MCF 10A (cell line): ENCODE measurements at regions of chr11 and their contacts with region 1.

Region 1: GRCh38 chr11:62665075-62665598 is at the starts of genes C11orf98 and CSKMT:
- DNase-seq: peak; percentile 92
- H3K4me3 Mint-ChIP-seq: peak within 1 kb of the TSS; percentile 98
- H3K27ac Mint-ChIP-seq: peak within 1 kb of the TSS; percentile 91
- H3K4me1 Mint-ChIP-seq: peaks cover 5% of the 10 kb centered on the region
- H3K27me3 Mint-ChIP-seq: no peaks in the 10 kb centered on the region
- CTCF ChIP-seq: no peak
- total RNA-seq, gene C11orf98: 81.2 and 91.6 TPM in 2 replicates
- total RNA-seq, gene CSKMT: 15.4 and 31.2 TPM in 2 replicates

Region 2: GRCh38 chr11:62573592-62574362 is 91.4 kb before region 1 on chr11 and contains the start of gene EEF1G:
- CTCF ChIA-PET with region 1: interaction called, 3 read pairs
- POLR2A ChIA-PET with region 1: interaction called, 39 read pairs
- intact Hi-C with region 1: no loop called
- DNase-seq: peak; percentile 100
- H3K4me3 Mint-ChIP-seq: peak within 1 kb of the TSS; percentile 100
- H3K27ac Mint-ChIP-seq: peak within 1 kb of the TSS; percentile 100
- H3K4me1 Mint-ChIP-seq: peaks cover 30% of the 10 kb centered on the region
- H3K27me3 Mint-ChIP-seq: no peaks in the 10 kb centered on the region
- CTCF ChIP-seq: no peak
- total RNA-seq, gene EEF1G: 1,510 and 1,855 TPM in 2 replicates

Region 3: GRCh38 chr11:62621567-62622470 is 43.3 kb before region 1 on chr11 and contains the start of gene B3GAT3:
- CTCF ChIA-PET with region 1: no interaction called
- POLR2A ChIA-PET with region 1: interaction called, 86 read pairs
- intact Hi-C with region 1: no loop called
- DNase-seq: peak; percentile 98
- H3K4me3 Mint-ChIP-seq: peak within 1 kb of the TSS; percentile 97
- H3K27ac Mint-ChIP-seq: peak within 1 kb of the TSS; percentile 92
- H3K4me1 Mint-ChIP-seq: peaks cover 12% of the 10 kb centered on the region
- H3K27me3 Mint-ChIP-seq: no peaks in the 10 kb centered on the region
- CTCF ChIP-seq: no peak
- total RNA-seq, gene B3GAT3: 40.1 and 42.4 TPM in 2 replicates

Region 4: GRCh38 chr11:62689421-62690183 is 24.5 kb after region 1 on chr11 and contains the start of gene LRRN4CL:
- CTCF ChIA-PET with region 1: interaction called, 13 read pairs
- POLR2A ChIA-PET with region 1: interaction called, 12 read pairs
- intact Hi-C with region 1: no loop called
- DNase-seq: peak; percentile 83
- H3K4me3 Mint-ChIP-seq: no peak within 1 kb of the TSS
- H3K27ac Mint-ChIP-seq: peak within 1 kb of the TSS; percentile 86
- H3K4me1 Mint-ChIP-seq: peaks cover 19% of the 10 kb centered on the region
- H3K27me3 Mint-ChIP-seq: no peaks in the 10 kb centered on the region
- CTCF ChIP-seq: no peak
- total RNA-seq, gene LRRN4CL: 0.42 and 0.81 TPM in 2 replicates

Region 5: GRCh38 chr11:62737196-62737595 is 72.1 kb after region 1 on chr11:
- CTCF ChIA-PET with region 1: no interaction called
- POLR2A ChIA-PET with region 1: no interaction called
- intact Hi-C with region 1: no loop called
- DNase-seq: no peak
- H3K4me3 Mint-ChIP-seq: no peak overlapping the region
- H3K27ac Mint-ChIP-seq: no peak overlapping the region
- H3K4me1 Mint-ChIP-seq: no peaks in the 10 kb centered on the region
- H3K27me3 Mint-ChIP-seq: no peaks in the 10 kb centered on the region
- CTCF ChIP-seq: no peak

Region 6: DNA sequence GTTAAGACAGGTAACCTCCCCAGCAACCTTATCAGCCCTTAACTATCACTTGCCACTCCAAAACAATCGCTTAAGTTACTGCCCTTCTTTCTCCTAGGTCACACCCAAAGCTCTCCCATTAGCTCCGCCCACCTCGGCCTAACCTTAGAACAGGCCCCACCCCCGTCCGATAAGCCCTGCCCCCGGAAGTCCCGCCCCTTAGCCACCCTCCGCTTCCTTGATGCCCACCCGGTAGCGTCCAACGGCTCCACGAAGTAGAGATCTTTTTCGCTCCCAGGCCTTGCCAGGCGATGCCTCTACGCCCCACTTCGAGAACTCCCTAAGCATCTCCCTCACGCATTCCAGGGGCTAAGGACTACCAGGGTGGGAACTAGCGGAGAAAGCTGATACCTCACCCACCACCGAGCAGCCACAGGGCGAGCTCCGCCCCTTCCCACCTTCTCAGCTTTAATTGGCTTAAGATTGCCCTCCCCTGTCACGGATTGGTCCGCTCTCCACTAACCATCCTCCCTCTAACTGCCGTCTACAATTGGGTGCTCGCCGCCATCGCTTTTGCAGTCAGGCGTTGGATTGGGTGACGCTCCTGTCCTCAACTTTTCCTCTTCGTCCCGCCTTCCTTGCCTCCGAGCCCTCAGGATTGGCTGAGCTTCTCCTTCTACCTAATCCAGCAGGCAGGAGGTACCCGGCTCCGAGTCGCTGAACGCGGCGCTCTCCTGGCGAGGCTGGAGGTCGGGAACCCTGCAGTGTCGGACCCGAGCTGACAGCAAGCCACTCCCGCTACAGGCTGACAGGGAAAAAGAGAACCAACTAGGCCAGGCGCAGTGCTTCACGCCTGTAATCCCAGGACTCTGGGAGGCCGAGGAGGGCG is 88.8 kb after region 1 on chr11 and contains the start of gene ZBTB3:
- CTCF ChIA-PET with region 1: interaction called, 3 read pairs
- POLR2A ChIA-PET with region 1: interaction called, 13 read pairs
- intact Hi-C with region 1: no loop called
- DNase-seq: peak; percentile 100
- H3K4me3 Mint-ChIP-seq: peak within 1 kb of the TSS; percentile 98
- H3K27ac Mint-ChIP-seq: peak within 1 kb of the TSS; percentile 96
- H3K4me1 Mint-ChIP-seq: peaks cover 3% of the 10 kb centered on the region
- H3K27me3 Mint-ChIP-seq: no peaks in the 10 kb centered on the region
- CTCF ChIP-seq: no peak
- total RNA-seq, gene ZBTB3: 7.1 and 11.6 TPM in 2 replicates

Region 7: GRCh38 chr11:62841361-62842184 is 176.4 kb after region 1 on chr11:
- CTCF ChIA-PET with region 1: no interaction called
- POLR2A ChIA-PET with region 1: interaction called, 18 read pairs
- intact Hi-C with region 1: no loop called
- DNase-seq: peak; percentile 99
- H3K4me3 Mint-ChIP-seq: no peak overlapping the region
- H3K27ac Mint-ChIP-seq: no peak overlapping the region
- H3K4me1 Mint-ChIP-seq: peaks cover 12% of the 10 kb centered on the region
- H3K27me3 Mint-ChIP-seq: no peaks in the 10 kb centered on the region
- CTCF ChIP-seq: no peak